ENCODE measurements at regions of chr17 and their contacts with region 1.

Region 1: DNA sequence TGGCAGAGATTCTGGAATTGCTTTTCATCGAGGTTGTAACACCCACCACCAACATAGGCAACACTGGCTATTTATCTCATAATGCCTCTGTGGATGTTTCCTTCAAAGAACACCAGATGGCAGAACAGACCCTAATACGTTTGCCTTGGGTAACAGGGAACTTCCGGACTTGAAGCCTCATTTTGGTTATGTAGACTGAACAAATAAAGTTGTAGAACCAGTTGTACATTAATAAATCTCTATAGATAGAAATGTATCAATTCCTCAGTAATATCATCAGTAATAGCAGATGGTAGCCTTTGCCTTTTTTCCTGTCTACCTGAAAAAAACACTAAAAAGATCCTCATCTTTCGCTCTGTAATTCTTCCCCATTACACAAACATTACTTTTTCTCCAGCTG is 25.9 kb upstream of the APOH start:
- DNase-seq: peak; percentile 93
- ATAC-seq: peak; percentile 94
- H3K4me3 ChIP-seq: no peak overlapping the region
- H3K27ac ChIP-seq: no peak overlapping the region
- H3K4me1 ChIP-seq: peaks cover 8% of the 10 kb centered on the region
- H3K27me3 ChIP-seq: no peaks in the 10 kb centered on the region
- CTCF ChIP-seq: peak; percentile 96

Region 2: DNA sequence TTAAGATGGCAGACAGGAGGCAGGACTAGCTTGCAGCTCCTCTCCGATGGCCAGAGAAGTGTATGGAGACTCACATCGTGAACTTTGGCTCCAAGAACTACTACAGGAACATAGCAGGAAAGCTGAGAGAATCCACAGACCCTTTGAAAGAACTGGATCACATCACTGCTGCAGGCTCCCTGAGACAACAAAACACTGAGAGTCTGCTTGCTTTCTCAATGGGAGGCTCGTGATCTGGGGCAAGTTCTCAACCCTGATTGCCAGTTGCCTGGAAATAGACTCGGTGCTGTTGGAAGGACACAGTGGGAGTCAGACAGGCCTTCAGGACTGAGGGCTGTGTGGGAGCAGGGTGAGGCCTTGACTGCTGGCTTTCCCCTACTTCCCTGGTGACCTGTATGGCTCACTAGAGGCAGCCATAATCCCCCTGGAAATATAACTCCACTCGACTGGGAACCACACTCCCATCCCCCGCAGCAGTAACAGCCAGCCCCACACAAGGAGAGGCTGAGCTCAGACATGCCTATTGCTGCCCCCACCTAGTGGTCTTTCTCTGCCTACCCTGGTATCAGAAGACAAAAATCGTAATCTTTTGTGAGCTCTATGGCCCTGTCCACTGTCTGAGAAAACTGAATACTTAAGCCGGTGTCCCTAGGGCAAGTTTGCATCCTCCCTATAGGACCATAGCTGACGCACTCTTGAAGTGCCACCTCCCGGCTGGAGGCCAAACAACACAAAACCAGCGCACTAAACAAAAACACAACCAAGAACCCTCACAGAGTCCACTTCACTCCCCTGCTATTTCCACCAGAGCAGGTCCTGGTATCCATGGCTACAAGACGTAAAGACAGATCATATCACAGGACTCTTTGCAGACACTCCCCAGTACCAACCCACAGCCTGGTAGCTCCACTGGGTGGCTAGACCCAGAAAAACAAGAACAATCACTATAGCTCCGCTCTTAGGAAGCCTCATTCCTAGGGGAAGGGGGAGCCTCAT is 301.5 kb before region 1 on chr17:
- CTCF ChIA-PET with region 1: no interaction called
- POLR2A ChIA-PET with region 1: no interaction called
- intact Hi-C with region 1: no loop called
- DNase-seq: no peak
- ATAC-seq: no peak
- H3K4me3 ChIP-seq: no peak overlapping the region
- H3K27ac ChIP-seq: no peak overlapping the region
- H3K4me1 ChIP-seq: no peaks in the 10 kb centered on the region
- H3K27me3 ChIP-seq: no peaks in the 10 kb centered on the region
- CTCF ChIP-seq: no peak

Region 3: GRCh38 chr17:66222798-66223350 is 32.2 kb before region 1 on chr17:
- CTCF ChIA-PET with region 1: no interaction called
- POLR2A ChIA-PET with region 1: no interaction called
- intact Hi-C with region 1: no loop called
- DNase-seq: no peak
- ATAC-seq: no peak
- H3K4me3 ChIP-seq: no peak overlapping the region
- H3K27ac ChIP-seq: no peak overlapping the region
- H3K4me1 ChIP-seq: no peaks in the 10 kb centered on the region
- H3K27me3 ChIP-seq: peaks cover 5% of the 10 kb centered on the region; the same call in 1 of the 2 replicates
- CTCF ChIP-seq: no peak

Region 4: DNA sequence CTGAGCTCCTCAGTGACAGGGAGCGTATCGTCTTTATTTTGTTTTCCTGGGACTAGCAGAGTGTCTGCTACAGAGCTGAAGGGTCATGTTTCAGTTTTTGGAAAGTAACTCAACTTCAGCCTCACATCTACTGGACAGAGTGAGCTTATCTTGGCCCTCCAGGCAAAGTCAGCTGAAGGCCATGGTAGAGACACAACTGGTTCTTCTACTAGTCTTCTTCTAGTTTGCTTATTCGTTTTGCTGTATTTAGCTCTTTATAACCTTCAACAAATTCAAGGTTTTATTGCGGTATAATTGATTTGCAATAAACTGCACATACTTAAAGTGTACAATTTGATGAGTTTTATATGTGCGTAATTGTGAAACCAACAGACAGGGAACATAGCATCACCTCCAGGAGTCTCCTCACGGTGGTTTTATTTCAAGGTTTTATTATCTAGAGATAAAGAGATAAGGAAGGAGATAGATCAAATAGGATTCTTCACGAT is 41.2 kb after region 1 on chr17:
- CTCF ChIA-PET with region 1: no interaction called
- POLR2A ChIA-PET with region 1: no interaction called
- intact Hi-C with region 1: loop called (anchors 1 kb)
- DNase-seq: no peak
- ATAC-seq: peak; percentile 33; the same call in 1 of the 2 replicates
- H3K4me3 ChIP-seq: no peak overlapping the region
- H3K27ac ChIP-seq: no peak overlapping the region
- H3K4me1 ChIP-seq: peaks cover 2% of the 10 kb centered on the region
- H3K27me3 ChIP-seq: no peaks in the 10 kb centered on the region
- CTCF ChIP-seq: no peak; the same call in 1 of the 2 replicates

Region 5: GRCh38 chr17:66426397-66427033 is 171.4 kb after region 1 on chr17:
- CTCF ChIA-PET with region 1: interaction called, 3 read pairs
- POLR2A ChIA-PET with region 1: no interaction called
- intact Hi-C with region 1: loop called (anchors 1 kb)
- DNase-seq: peak; percentile 66
- ATAC-seq: peak; percentile 78
- H3K4me3 ChIP-seq: no peak overlapping the region
- H3K27ac ChIP-seq: no peak overlapping the region
- H3K4me1 ChIP-seq: peaks cover 26% of the 10 kb centered on the region
- H3K27me3 ChIP-seq: no peaks in the 10 kb centered on the region
- CTCF ChIP-seq: peak; percentile 73

Measured in PC-3 (cell line).